ENCODE measurements at regions of chr4 and their contacts with region 1.

Region 1: GRCh38 chr4:139030614-139031235 is 15.1 kb downstream of the NOCT start:
- DNase-seq: peak in 41 of 42 donors; percentile 60 to 92 (median 81)

Region 2: GRCh38 chr4:138555584-138555983 is 475.1 kb before region 1 on chr4:
- intact Hi-C with region 1: no loop called
- DNase-seq: no peak

Region 3: GRCh38 chr4:139099366-139099982 is 68.7 kb after region 1 on chr4:
- intact Hi-C with region 1: no loop called
- DNase-seq: peak; percentile 25 to 87 (median 72)

Region 4: GRCh38 chr4:139295206-139295941 is 264.6 kb after region 1 on chr4:
- intact Hi-C with region 1: loop called (anchors 5 kb)
- DNase-seq: peak; percentile 96 to 100 (median 99)